H1 (cell line): ENCODE measurements at regions of chr16 and their contacts with region 1.

Region 1: DNA sequence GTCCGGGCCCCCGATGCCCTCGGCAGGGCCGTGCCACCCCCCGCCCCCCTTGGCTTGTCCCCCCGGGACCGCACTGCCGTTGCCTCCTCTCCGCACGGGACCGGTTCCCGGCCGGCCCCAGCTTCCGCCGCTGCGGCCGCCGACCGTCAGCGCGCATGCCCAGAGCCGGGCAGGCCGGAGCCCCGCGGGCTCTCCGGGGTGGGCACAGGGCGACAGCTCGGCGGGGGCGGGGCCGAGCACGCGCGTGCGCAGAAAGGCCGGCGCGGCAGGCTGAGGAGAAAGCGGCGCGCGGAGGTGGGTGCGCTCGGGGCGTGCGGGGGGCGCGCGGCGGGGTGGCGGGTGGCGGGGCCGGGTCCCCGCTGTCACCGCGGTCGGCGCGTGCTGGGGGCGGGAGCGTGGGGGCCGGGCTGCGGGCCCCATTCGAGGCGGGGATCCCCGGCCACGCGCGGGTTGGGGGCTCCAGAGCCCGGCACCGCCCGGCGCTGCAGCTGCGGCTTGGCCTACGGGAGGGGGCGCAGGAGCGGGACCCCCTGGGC is at the start of gene TBC1D24:
- DNase-seq: peak in 1 of 2 experiments; percentile 90
- H3K4me3 ChIP-seq: peak within 1 kb of the TSS; percentile 61 to 93 (median 72)
- H3K27ac ChIP-seq: no peak within 1 kb of the TSS
- H3K4me1 ChIP-seq: peaks cover 0 to 30% (median 14%) of the 10 kb centered on the region in 4 experiments; a peak in 6 of 7 replicates
- H3K27me3 ChIP-seq: peaks cover 20 to 55% (median 43%) of the 10 kb centered on the region in 4 experiments
- CTCF ChIP-seq: no peak
- EP300 ChIP-seq: no peak
- POLR2A ChIP-seq: no peak
- RAD21 ChIP-seq: no peak
- total RNA-seq, gene TBC1D24: 18.6 and 21.5 TPM in 2 replicates

Region 2: GRCh38 chr16:2404099-2404498 is 70.8 kb before region 1 on chr16:
- CTCF ChIA-PET with region 1: no interaction called
- POLR2A ChIA-PET with region 1: no interaction called
- DNase-seq: no peak
- H3K4me3 ChIP-seq: no peak overlapping the region
- H3K27ac ChIP-seq: no peak overlapping the region
- H3K4me1 ChIP-seq: no peaks in the 10 kb centered on the region
- H3K27me3 ChIP-seq: no peaks in the 10 kb centered on the region
- CTCF ChIP-seq: no peak
- EP300 ChIP-seq: no peak
- POLR2A ChIP-seq: no peak
- RAD21 ChIP-seq: no peak

Region 3: DNA sequence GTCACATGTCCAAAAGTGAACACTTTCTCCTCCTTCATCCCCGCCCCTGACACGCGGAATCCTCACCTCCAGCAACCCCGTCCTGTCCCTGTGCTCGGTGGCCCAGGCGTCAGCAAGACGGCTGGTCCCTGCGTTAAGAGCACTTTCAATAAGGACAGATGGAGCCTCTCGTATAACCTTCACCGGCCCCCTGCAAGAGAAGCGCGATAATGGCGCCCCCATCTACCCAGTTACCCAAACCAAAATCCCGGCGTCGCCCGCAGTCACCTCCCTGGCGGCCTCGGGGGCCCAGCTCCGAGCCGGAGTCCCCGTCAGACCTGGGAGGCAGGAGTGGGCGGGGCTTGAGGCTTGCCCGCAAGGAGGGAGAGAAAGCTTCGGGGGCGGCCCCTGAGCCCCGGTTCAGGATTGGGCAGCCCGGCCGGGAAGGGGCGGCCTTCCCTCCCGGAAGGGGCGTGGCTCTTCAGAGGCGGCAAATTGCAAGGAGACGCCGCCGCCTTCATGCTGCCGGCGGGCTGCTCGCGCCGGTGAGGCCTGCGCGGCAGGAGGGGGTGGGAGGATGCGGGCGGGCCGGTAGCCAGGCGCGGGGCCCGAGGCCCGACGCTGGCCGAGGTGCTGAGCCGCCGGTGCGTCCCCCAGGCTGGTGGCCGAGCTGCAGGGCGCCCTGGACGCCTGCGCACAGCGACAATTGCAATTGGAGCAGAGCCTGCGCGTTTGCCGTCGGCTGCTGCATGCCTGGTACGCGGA is 15.1 kb before region 1 on chr16 and contains the start of gene TEDC2:
- CTCF ChIA-PET with region 1: interaction called, 15 read pairs
- POLR2A ChIA-PET with region 1: interaction called, 20 read pairs
- DNase-seq: peak; percentile 93 to 98
- H3K4me3 ChIP-seq: peak within 1 kb of the TSS; percentile 55 to 78 (median 68)
- H3K27ac ChIP-seq: no peak within 1 kb of the TSS; the same call in 1 of the 2 replicates
- H3K4me1 ChIP-seq: peaks cover 0 to 18% (median 15%) of the 10 kb centered on the region in 4 experiments; a peak in 6 of 7 replicates
- H3K27me3 ChIP-seq: no peaks in the 10 kb centered on the region
- CTCF ChIP-seq: no peak
- EP300 ChIP-seq: no peak
- POLR2A ChIP-seq: peak in 1 of 2 experiments; percentile 52; a peak in 1 of 3 replicates
- RAD21 ChIP-seq: no peak
- total RNA-seq, gene TEDC2: 54.2 and 54.6 TPM in 2 replicates